B cell (primary cell): ENCODE measurements at regions of chr11 and their contacts with region 1.

Region 1: DNA sequence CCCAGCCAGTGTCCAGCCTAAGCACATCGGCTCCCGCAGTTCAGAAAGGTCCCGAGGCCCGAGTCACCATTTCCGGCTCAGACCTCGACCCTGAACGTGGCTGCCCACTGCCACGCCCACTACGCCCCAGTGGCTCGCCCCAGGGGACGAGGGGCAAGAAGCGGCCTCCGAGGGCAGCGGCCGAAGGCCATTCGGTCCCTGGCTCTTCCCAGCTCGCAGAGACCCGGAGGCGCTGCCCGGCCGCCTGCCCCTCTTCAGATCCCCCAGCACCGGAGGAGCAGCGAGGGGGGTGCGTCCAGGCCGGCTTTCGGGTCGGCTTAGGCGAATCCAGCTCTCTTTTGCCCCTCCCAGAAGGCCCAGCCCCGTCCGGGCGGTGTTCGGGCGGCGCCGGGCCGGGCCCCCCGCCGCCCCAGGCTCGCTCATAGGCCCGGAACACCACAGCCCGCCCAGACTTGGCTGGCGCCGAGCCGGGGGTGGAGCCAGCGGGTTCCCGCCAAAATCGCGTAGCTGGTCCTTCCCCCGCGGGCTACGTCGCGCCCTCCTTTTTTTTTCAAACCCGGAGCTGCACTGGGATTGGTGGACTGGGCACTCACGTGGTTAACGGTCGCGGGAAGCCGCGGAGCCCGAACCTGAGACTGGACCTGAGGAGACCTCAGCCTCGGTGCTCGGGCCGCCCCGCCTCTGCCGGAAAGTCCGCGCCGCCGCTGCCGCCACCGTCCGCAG is at the start of gene WEE1:
- DNase-seq: peak; percentile 97
- ATAC-seq: peak; percentile 87
- H3K4me3 ChIP-seq: peak within 1 kb of the TSS; percentile 52 to 96 (median 90)
- H3K4me3 Mint-ChIP-seq: peak within 1 kb of the TSS; percentile 97
- H3K27ac ChIP-seq: peak within 1 kb of the TSS; percentile 83 to 89
- H3K27ac Mint-ChIP-seq: peak within 1 kb of the TSS; percentile 94
- H3K4me1 ChIP-seq: peaks cover 51 to 55% of the 10 kb centered on the region in 2 donors
- H3K4me1 Mint-ChIP-seq: peaks cover 64% of the 10 kb centered on the region
- H3K27me3 ChIP-seq: no peaks in the 10 kb centered on the region
- H3K27me3 Mint-ChIP-seq: no peaks in the 10 kb centered on the region
- CTCF ChIP-seq: no peak
- total RNA-seq, gene WEE1: 31.2 and 31.3 TPM in 2 replicates

Region 2: GRCh38 chr11:9594267-9595046 is 21.2 kb after region 1 on chr11:
- CTCF ChIA-PET with region 1: interaction called, 21 read pairs
- POLR2A ChIA-PET with region 1: no interaction called
- intact Hi-C with region 1: loop called (anchors 2 kb)
- DNase-seq: no peak
- ATAC-seq: no peak
- H3K4me3 ChIP-seq: no peak overlapping the region
- H3K4me3 Mint-ChIP-seq: no peak overlapping the region
- H3K27ac ChIP-seq: no peak overlapping the region
- H3K27ac Mint-ChIP-seq: peak overlapping the region; percentile 1
- H3K4me1 ChIP-seq: peaks cover 21 to 30% of the 10 kb centered on the region in 2 donors
- H3K4me1 Mint-ChIP-seq: peaks cover 31% of the 10 kb centered on the region
- H3K27me3 ChIP-seq: no peaks in the 10 kb centered on the region
- H3K27me3 Mint-ChIP-seq: no peaks in the 10 kb centered on the region
- CTCF ChIP-seq: no peak

Region 3: GRCh38 chr11:9601037-9601875 is 28.0 kb after region 1 on chr11:
- CTCF ChIA-PET with region 1: interaction called, 21 read pairs
- POLR2A ChIA-PET with region 1: interaction called, 12 read pairs
- intact Hi-C with region 1: loop called (anchors 2 kb)
- DNase-seq: peak; percentile 89
- ATAC-seq: peak; percentile 80
- H3K4me3 ChIP-seq: peak overlapping the region; percentile 26 to 52 (median 44)
- H3K4me3 Mint-ChIP-seq: peak overlapping the region; percentile 79
- H3K27ac ChIP-seq: peak overlapping the region; percentile 82 to 85
- H3K27ac Mint-ChIP-seq: peak overlapping the region; percentile 87
- H3K4me1 ChIP-seq: peaks cover 36 to 45% of the 10 kb centered on the region in 2 donors
- H3K4me1 Mint-ChIP-seq: peaks cover 51% of the 10 kb centered on the region
- H3K27me3 ChIP-seq: no peaks in the 10 kb centered on the region
- H3K27me3 Mint-ChIP-seq: no peaks in the 10 kb centered on the region
- CTCF ChIP-seq: no peak